MCF 10A (cell line): ENCODE measurements at regions of chr1 and their contacts with region 1.

Region 1: DNA sequence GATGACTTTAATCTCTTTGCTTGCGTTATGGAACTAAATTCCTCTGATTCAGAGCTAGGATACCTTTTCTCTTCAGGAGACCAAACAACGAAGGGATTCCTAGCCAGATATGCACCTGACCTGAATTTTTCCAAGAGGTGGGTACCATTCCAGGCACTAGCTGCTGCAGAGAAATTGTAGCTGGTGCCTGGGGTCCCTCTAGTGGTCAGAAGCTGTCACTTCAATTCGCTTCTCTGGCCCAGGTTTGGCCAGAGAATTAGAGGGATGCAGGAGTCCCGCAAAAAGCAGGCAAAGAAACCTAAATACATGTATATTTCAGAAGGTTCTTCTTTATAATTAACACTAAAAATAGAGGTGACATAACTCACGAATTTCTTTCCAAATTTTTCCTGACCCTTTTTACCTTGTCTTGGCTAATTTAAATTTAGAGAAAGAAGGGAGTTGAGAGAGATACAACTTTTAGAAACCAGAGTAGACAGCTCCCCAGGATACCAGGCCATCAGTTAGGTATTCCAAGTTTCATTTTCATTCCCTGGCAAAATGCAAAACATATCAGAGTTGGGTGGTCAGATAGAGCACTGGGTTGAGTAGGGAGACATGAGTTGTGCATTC is 9.6 kb downstream of the ACKR1 start:
- DNase-seq: peak; percentile 75
- H3K4me3 Mint-ChIP-seq: no peak overlapping the region
- H3K27ac Mint-ChIP-seq: peak overlapping the region; percentile 30
- H3K4me1 Mint-ChIP-seq: peaks cover 42% of the 10 kb centered on the region
- H3K27me3 Mint-ChIP-seq: no peaks in the 10 kb centered on the region
- CTCF ChIP-seq: peak; percentile 92

Region 2: DNA sequence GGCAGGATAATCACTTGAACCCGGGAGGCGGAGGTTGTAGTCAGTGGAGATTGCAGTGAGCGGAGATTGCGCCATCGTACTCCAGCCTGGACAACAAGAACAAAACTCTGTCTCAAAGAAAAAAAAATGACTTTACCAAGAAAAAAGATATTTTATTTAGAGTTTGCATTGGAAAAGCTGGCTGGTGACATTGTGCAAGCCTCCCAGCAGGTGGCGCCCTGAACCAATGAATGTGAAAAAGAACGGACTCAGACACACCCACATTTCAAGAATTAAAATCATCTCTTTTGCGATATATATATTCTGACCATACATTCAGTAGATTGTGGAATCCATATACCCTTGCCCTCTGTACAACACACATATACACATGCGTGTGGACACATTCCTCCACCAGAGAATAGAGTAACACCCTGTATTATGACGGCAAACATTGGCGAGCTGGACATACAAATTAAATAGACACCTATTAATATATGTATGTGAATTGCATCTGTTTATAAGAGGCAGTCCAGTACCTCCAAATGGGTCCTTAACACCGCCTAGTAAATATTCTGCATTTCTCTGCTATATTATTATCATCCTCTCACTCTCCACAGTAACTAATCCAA is 81.9 kb before region 1 on chr1:
- CTCF ChIA-PET with region 1: interaction called, 358 read pairs
- POLR2A ChIA-PET with region 1: interaction called, 4 read pairs
- intact Hi-C with region 1: loop called (anchors 1 kb)
- DNase-seq: peak; percentile 92
- H3K4me3 Mint-ChIP-seq: no peak overlapping the region
- H3K27ac Mint-ChIP-seq: no peak overlapping the region
- H3K4me1 Mint-ChIP-seq: no peaks in the 10 kb centered on the region
- H3K27me3 Mint-ChIP-seq: no peaks in the 10 kb centered on the region
- CTCF ChIP-seq: peak; percentile 95

Region 3: DNA sequence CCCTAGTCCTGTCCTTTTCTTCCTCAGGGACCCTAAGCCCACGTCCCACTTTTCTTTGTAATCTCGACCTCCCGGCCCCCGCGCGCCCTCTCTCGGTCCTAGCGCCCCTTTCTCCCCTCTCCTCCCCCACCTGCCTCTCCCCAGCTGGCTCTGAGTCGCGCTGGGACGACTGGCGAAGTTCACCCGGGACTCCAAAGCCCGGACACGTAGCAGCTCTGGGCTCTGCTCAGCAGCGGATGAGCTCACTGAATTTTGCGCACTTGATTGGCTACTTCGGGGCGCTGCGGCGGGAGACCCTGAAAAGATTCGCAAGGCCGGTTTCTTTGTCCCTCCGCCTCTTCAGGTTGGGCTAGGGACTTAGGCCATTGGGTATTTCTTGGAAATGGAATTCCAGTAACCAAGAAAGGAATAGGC is 25.9 kb before region 1 on chr1:
- CTCF ChIA-PET with region 1: interaction called, 315 read pairs
- POLR2A ChIA-PET with region 1: no interaction called
- intact Hi-C with region 1: no loop called
- DNase-seq: no peak
- H3K4me3 Mint-ChIP-seq: no peak overlapping the region
- H3K27ac Mint-ChIP-seq: no peak overlapping the region
- H3K4me1 Mint-ChIP-seq: peaks cover 36% of the 10 kb centered on the region
- H3K27me3 Mint-ChIP-seq: peaks cover 38% of the 10 kb centered on the region
- CTCF ChIP-seq: no peak

Region 4: GRCh38 chr1:159261311-159261710 is 47.1 kb after region 1 on chr1:
- CTCF ChIA-PET with region 1: interaction called, 34 read pairs
- POLR2A ChIA-PET with region 1: interaction called, 3 read pairs
- intact Hi-C with region 1: no loop called
- DNase-seq: no peak
- H3K4me3 Mint-ChIP-seq: peak overlapping the region; percentile 48
- H3K27ac Mint-ChIP-seq: peak overlapping the region; percentile 86
- H3K4me1 Mint-ChIP-seq: peaks cover 33% of the 10 kb centered on the region
- H3K27me3 Mint-ChIP-seq: no peaks in the 10 kb centered on the region
- CTCF ChIP-seq: no peak

Region 5: GRCh38 chr1:159492575-159493323 is 278.5 kb after region 1 on chr1:
- CTCF ChIA-PET with region 1: interaction called, 21 read pairs
- POLR2A ChIA-PET with region 1: no interaction called
- intact Hi-C with region 1: no loop called
- DNase-seq: peak; percentile 81
- H3K4me3 Mint-ChIP-seq: no peak overlapping the region
- H3K27ac Mint-ChIP-seq: peak overlapping the region; percentile 80
- H3K4me1 Mint-ChIP-seq: peaks cover 17% of the 10 kb centered on the region
- H3K27me3 Mint-ChIP-seq: no peaks in the 10 kb centered on the region
- CTCF ChIP-seq: no peak

Region 6: DNA sequence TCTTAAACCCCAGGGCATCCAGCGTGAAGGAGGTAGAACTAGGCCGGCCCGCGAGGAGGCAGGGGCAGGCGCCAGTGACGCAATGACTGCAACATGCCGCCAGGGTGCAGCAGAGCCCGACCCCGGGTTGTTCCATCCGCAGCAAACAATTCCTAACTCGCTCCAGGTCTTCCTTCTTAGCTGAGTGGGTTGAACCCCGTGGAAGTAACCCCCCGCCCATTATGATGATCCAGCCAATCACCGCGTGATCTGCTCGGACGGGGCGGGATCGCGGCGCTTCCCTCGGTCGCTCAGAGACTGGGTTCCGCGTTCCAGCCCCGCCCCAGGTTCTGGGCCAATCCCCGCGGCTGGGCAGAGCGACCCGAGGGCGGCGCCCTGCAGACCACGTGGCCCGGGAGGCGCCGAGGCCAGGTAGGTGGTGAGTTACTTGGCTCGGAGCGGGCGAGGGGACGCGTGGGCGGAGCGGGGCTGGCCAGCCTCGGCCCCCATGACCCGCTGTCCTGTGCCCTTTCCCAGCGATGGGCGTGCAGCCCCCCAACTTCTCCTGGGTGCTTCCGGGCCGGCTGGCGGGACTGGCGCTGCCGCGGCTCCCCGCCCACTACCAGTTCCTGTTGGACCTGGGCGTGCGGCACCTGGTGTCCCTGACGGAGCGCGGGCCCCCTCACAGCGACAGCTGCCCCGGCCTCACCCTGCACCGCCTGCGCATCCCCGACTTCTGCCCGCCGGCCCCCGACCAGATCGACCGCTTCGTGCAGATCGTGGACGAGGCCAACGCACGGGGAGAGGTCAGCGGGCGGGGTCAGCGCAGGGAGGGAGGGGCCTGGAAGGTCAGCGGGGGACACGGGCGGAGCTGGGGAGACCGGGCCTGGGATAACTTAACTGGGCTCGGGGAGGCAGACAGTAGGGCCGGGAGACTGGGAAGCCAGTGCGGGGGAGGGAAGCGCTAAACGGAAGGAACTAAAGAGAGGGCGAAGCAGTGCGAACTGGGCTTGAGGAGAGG is 566.6 kb after region 1 on chr1 and contains the start of gene DUSP23:
- CTCF ChIA-PET with region 1: interaction called, 255 read pairs
- POLR2A ChIA-PET with region 1: interaction called, 15 read pairs
- intact Hi-C with region 1: loop called (anchors 1 kb)
- DNase-seq: peak; percentile 100
- H3K4me3 Mint-ChIP-seq: peak within 1 kb of the TSS; percentile 87
- H3K27ac Mint-ChIP-seq: peak within 1 kb of the TSS; percentile 71
- H3K4me1 Mint-ChIP-seq: peaks cover 65% of the 10 kb centered on the region
- H3K27me3 Mint-ChIP-seq: no peaks in the 10 kb centered on the region
- CTCF ChIP-seq: peak; percentile 97
- total RNA-seq, gene DUSP23: 119 and 178 TPM in 2 replicates

Region 7: DNA sequence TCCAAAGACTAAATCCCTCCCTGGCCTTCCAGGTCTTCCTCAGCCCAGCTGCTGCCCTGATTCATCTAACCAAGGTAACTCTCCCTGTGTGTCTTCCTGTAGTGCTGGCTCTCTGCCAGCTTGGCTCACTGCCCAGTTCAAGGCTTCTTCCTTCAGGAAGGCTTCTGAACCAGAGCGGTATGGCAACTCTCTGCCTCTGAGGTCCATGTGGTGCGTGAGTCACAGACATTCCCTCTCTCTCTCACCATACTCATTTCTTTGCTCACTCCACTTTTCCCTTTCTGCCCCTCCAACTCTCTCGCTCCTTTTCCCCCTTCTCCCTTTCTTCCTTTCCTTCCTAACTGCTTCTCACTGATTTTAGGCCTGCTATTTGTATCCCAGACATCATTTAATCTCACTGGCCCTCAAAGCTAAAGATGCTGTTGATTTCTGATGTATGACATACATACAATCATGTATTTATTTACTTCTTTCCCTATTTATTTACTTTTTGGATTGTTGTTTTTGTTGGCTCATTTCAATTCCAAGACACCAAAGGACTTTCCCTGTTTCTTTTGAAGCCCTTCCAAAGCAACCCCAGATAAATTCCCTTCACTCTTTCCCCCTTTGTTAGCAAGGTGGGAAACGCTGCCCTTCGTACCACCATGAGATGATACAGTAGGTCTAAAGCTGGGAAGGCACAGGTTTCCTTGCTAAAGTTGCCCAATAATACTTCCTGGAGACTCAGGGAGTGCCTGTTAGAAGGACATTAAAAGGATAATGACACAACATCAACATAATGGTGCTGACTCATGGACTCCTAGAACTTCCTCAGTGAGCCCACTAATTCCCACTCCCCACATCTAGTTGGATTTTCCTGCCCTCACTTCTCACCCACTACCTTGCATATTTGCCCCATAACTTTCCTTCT is 667.9 kb after region 1 on chr1:
- CTCF ChIA-PET with region 1: interaction called, 32 read pairs
- POLR2A ChIA-PET with region 1: no interaction called
- intact Hi-C with region 1: no loop called
- DNase-seq: peak; percentile 100
- H3K4me3 Mint-ChIP-seq: no peak overlapping the region
- H3K27ac Mint-ChIP-seq: no peak overlapping the region
- H3K4me1 Mint-ChIP-seq: peaks cover 14% of the 10 kb centered on the region
- H3K27me3 Mint-ChIP-seq: no peaks in the 10 kb centered on the region
- CTCF ChIP-seq: no peak